ENCODE measurements at regions of chr15 and their contacts with region 1.

Region 1: DNA sequence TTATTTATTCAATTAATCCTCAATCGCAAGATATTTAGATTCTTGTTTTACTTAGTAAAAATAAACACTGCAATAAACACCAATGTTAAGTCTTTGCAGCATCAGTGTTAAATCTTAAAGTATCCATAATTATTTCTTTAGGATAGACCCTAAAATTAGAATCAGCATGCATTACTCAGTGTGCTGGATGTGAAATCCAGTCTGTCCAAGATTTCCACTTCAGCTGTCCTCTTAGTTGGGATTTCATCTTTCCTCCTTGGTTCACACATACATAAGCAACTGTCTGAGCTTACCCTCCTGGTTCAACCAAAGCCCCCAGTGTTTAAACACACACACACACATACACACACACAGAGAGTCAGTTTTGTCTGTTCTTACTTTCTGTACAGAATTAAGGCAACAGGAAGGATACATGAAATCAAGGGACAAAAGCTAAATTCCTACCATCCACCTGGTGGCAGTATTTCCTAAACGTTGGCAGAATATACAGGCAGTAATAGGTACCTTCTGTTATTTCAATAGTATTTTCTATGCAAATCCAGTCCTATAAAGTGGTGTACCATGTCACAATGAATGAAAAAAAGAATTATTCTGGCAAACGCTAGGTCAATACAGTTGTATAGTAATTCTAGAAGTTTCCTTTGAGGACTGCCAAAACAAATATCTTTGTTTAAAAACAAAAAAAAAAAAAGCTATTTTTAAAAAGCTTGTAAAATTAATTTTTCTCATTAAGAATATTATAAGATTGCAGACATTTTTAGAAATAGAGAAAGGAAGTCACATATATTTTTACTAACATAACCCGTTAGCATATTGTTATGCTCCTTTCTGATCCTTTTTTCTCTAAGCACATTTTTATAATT is 27.3 kb upstream of the DMXL2 start:
- H3K4me3 ChIP-seq: no peak overlapping the region
- H3K27ac ChIP-seq: no peak overlapping the region
- H3K4me1 ChIP-seq: no peaks in the 10 kb centered on the region
- CTCF ChIP-seq: peak; percentile 62; the same call in 1 of the 2 replicates

Region 2: GRCh38 chr15:51499379-51499976 is 150.4 kb before region 1 on chr15:
- CTCF ChIA-PET with region 1: no interaction called
- POLR2A ChIA-PET with region 1: no interaction called
- H3K4me3 ChIP-seq: no peak overlapping the region
- H3K27ac ChIP-seq: no peak overlapping the region
- H3K4me1 ChIP-seq: no peaks in the 10 kb centered on the region
- CTCF ChIP-seq: no peak

Region 3: DNA sequence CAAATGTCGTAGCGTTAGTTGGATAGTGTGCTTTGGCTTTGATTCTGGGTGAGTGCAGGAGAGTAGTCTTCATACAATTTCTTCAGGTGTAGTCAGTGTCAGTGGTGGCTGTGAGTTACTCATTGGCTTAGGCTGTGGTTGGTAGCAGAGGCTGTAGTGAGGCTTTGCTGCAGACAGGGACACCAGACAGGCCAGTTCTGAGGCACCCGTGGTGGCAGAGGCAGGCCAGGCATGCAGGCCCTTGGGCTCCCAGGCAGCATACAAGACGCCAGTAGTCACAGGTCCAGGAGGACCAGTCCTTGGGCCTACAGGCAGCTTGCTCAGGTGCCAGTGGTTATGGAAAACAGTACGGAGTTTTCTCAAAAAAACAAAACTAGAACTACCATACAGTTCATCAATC is 88.6 kb before region 1 on chr15:
- CTCF ChIA-PET with region 1: no interaction called
- POLR2A ChIA-PET with region 1: no interaction called
- H3K4me3 ChIP-seq: no peak overlapping the region
- H3K27ac ChIP-seq: no peak overlapping the region
- H3K4me1 ChIP-seq: no peaks in the 10 kb centered on the region
- CTCF ChIP-seq: no peak

Region 4: GRCh38 chr15:51750792-51751685 is 101.1 kb after region 1 on chr15 and contains the start of gene TMOD2:
- CTCF ChIA-PET with region 1: no interaction called
- POLR2A ChIA-PET with region 1: no interaction called
- H3K4me3 ChIP-seq: peak within 1 kb of the TSS; percentile 66
- H3K27ac ChIP-seq: no peak within 1 kb of the TSS; the same call in 1 of the 2 replicates
- H3K4me1 ChIP-seq: 0 out of 2 replicates have a peak, but pooled peaks cover 2% of the 10 kb centered on the region
- CTCF ChIP-seq: no peak

Region 5: GRCh38 chr15:51768018-51768417 is 118.1 kb after region 1 on chr15:
- CTCF ChIA-PET with region 1: interaction called, 13 read pairs
- POLR2A ChIA-PET with region 1: no interaction called
- H3K4me3 ChIP-seq: no peak overlapping the region
- H3K27ac ChIP-seq: no peak overlapping the region
- H3K4me1 ChIP-seq: no peaks in the 10 kb centered on the region
- CTCF ChIP-seq: no peak

Region 6: GRCh38 chr15:51776952-51777574 is 127.2 kb after region 1 on chr15:
- CTCF ChIA-PET with region 1: interaction called, 109 read pairs
- POLR2A ChIA-PET with region 1: interaction called, 3 read pairs
- H3K4me3 ChIP-seq: no peak overlapping the region
- H3K27ac ChIP-seq: no peak overlapping the region
- H3K4me1 ChIP-seq: no peaks in the 10 kb centered on the region
- CTCF ChIP-seq: no peak